ENCODE measurements at regions of chr3 and their contacts with region 1.

Region 1: DNA sequence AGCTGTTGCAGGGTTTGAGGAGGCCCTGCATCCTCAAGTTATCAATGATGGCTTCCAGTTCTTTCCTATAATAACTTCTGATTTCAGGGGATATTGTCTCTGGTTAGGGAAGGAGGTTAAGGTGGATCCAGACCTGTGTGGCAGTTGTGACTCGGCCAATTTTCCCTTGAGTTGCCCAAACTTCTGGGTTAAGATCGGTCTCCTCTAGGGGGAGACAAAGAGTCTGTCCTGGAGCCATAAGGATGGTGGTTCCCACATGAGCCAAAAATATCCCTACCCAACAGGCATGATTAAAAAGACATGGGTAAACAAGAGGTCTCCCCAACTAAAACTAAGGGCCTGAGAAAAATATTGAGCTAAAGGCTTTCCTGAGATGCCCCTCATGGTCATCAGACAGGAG is 227.5 kb upstream of the MDFIC2 start:
- DNase-seq: no peak
- H3K4me3 Mint-ChIP-seq: no peak overlapping the region
- H3K27ac Mint-ChIP-seq: no peak overlapping the region
- H3K4me1 Mint-ChIP-seq: no peaks in the 10 kb centered on the region
- H3K27me3 Mint-ChIP-seq: peaks cover 10% of the 10 kb centered on the region

Region 2: GRCh38 chr3:70550723-70551319 is 10.9 kb after region 1 on chr3:
- CTCF ChIA-PET with region 1: interaction called, 10 read pairs
- POLR2A ChIA-PET with region 1: no interaction called
- DNase-seq: peak; percentile 75
- H3K4me3 Mint-ChIP-seq: no peak overlapping the region
- H3K27ac Mint-ChIP-seq: no peak overlapping the region
- H3K4me1 Mint-ChIP-seq: no peaks in the 10 kb centered on the region
- H3K27me3 Mint-ChIP-seq: peaks cover 7% of the 10 kb centered on the region

Region 3: DNA sequence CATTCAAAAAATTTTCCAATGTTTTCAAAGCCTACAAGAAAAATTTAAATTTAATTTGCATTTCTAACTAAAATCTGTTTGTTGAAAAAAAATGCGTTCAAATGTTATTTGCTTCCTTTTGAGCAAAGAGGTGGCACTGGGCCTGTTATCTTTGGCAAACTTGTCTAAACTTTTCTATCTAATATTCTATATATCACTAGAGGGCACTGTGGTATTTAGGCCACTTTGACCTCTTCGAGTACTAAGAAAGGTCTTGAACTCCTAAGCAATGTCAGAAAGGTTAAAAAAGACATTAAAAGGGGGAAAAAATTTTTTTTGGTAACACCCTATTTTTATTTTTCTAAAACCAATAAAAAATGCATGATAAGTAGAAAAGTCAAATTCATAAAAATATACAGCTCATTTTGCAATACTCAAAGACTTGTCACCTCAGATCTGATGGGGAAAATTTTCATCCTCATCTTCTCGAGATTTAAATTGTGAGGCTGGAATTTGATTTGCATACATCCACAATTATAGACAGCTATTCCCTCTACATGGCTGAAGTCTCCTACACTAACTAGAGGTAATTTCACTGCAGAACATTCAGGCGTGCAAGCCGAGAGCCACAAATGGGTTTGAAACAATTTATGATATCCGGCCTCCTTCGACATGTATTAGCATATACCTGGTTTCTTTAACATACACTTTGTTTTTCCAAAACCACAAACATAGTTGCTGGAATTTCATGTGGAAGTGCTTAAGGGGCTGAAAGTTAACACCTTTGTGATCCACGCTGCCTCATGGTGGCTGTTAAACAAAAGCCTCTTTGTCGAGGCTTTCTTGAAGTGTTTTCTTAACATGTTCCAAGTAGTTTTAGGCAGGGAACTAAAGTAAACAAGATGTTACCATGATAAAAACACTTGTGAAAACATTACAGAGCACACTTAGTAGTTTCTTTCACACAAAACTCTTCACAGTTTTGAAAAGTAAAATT is 467.2 kb after region 1 on chr3:
- CTCF ChIA-PET with region 1: no interaction called
- POLR2A ChIA-PET with region 1: no interaction called
- DNase-seq: peak; percentile 13
- H3K4me3 Mint-ChIP-seq: no peak overlapping the region
- H3K27ac Mint-ChIP-seq: no peak overlapping the region
- H3K4me1 Mint-ChIP-seq: peaks cover 64% of the 10 kb centered on the region
- H3K27me3 Mint-ChIP-seq: no peaks in the 10 kb centered on the region